ENCODE measurements at regions of chr2 and their contacts with region 1.

Region 1: GRCh38 chr2:30165050-30165520 is 18.3 kb downstream of the YPEL5 start:
- DNase-seq: no peak

Region 2: DNA sequence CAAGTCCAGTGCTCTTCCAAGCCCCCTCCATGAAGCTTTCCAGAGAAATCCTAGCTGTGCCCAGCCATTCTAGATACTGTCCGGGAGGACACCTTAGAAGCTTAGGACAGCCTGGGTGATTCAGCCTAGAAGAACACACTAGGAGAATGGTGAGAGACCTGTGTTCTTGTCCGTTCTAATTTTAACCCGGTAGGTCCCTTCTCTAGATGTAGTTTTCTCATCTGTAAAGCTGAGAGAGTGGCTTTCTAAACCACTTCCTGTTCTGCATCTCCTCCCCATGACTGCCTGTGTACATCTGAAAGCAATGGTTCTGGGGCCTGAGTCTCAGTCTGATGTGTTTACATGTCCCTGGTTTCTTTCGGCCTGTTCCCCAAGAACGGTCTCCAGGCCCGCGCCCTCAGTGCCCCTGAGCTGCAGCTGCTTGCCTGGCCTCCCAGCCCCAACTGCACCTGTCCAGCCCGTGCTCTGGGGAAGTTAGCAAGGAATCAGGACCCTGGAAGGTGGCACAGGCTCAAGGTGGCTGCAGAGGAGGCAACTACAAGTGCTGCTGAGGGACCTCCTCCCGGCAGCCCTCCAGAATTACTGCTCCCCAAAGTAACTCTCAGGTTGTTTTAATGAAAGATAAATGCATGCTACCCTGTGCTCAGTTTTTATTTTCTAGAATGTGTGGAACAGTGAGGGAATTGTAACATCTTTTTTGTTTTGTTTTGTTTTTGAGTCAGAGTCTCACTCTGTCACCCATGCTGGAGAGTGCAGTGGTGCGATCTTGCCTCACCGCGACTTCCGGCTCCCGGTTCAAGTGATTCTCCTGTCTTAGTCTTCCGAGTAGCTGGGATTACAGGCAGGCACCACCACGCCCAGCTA is 172.1 kb after region 1 on chr2:
- intact Hi-C with region 1: loop called (anchors 5 kb)
- DNase-seq: no peak

Region 3: GRCh38 chr2:31170071-31170698 is 1005.1 kb after region 1 on chr2:
- intact Hi-C with region 1: loop called (anchors 10 kb)
- DNase-seq: peak; percentile 82